ENCODE measurements at regions of chrX and their contacts with region 1.

Region 1: GRCh38 chrX:11787564-11787963 is 29.5 kb downstream of the MSL3 start:
- DNase-seq: peak; percentile 45 to 79 (median 77)
- H3K4me3 ChIP-seq: peak overlapping the region in 5 of 7 experiments; percentile 13 to 66 (median 40)
- H3K27ac ChIP-seq: no peak overlapping the region
- H3K4me1 ChIP-seq: peaks cover 0 to 20% (median 0%) of the 10 kb centered on the region in 4 experiments
- H3K27me3 ChIP-seq: peaks cover 0 to 13% (median 0%) of the 10 kb centered on the region in 5 experiments

Region 2: DNA sequence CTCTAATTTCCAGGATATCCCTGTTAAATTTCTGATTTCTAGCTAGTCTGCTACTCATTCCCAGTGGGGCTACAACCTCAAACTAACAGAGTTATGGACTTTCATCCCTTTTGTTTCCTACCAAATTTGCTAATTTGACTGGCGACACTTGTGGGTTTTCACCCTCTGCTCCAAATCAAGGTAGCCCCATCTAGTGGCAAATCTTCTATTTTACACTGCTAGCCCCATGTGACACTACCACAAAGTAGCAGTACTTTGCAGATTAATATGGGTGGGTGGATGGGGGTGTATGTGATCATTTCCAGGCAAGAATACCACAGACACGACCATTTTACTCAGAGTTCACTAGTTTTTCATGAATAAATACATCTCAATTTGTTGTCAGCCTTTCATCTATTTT is 120.8 kb after region 1 on chrX:
- CTCF ChIA-PET with region 1: interaction called, 10 read pairs
- POLR2A ChIA-PET with region 1: no interaction called
- DNase-seq: peak; percentile 39 to 70 (median 67)
- H3K4me3 ChIP-seq: no peak overlapping the region
- H3K27ac ChIP-seq: no peak overlapping the region
- H3K4me1 ChIP-seq: no peaks in the 10 kb centered on the region
- H3K27me3 ChIP-seq: no peaks in the 10 kb centered on the region